ENCODE measurements at regions of chr19 and their contacts with region 1.

Region 1: GRCh38 chr19:16315825-16316505 is 8.7 kb upstream of the KLF2 start:
- DNase-seq: peak in 1 of 2 donors; percentile 75
- ATAC-seq: peak; percentile 90
- H3K4me3 ChIP-seq: no peak overlapping the region
- H3K27ac ChIP-seq: peak overlapping the region; percentile 22 to 98
- H3K4me1 ChIP-seq: peaks cover 0 to 2% of the 10 kb centered on the region in 2 donors
- H3K27me3 ChIP-seq: no peaks in the 10 kb centered on the region

Region 2: DNA sequence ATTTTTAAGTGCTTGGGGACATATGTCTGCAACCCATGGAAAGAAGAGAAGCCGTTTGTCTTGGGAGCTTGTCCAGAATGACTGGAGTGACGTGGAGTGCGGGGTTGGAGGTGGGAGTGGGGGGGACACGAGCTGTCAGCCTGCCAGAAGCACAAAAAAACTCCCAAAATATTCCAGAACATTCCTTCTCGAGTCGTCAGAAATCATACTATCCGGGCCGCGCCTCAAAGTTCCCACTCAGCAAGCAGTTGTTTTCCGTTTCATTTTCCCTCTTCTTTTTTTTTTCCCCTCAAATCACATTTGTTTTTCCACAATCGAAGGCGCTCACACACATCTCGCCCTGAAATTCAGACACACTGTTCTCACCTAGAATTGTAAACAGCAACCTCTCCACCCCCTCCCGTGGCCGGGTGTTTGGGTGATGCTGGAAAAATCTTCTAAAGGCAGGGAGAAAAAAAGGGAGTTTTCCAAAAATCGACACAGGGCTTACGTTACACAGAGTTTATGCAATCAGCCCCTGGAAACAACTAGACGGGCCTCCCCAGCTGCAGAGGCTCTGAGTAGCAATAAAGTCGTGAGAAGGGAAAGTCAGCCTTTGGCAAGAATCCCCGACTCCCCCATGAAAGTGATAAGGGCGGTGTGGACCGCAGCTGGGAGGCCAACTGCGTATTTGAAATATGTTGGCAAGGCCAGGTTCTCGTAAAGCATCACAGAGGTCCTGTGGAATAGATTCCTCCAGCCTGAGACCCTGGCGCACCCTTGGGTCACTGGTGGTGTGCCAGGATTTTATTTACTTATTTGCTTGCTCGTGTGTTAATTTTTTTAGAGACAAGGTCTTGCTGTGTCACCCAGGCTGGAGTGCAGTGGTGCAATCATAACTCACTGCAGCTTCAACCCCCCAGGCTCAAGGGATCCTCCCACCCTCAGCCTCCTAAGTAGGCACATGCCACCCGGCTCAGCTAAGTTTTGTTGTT is 22.6 kb before region 1 on chr19:
- intact Hi-C with region 1: loop called in 1 of 2 experiments (anchors 2 kb)
- DNase-seq: peak; percentile 80 to 91
- ATAC-seq: peak; percentile 89
- H3K4me3 ChIP-seq: no peak overlapping the region
- H3K27ac ChIP-seq: peak overlapping the region; percentile 65 to 83
- H3K4me1 ChIP-seq: peaks cover 0 to 3% of the 10 kb centered on the region in 2 donors
- H3K27me3 ChIP-seq: no peaks in the 10 kb centered on the region